Dendritic cell treated with granulocyte-macrophage colony-stimulating factor and Interleukin-4, amounts not matched to agents 40 ng/mL and 50 ng/mL, for 4 days (primary cell): ENCODE measurements at regions of chr17 and their contacts with region 1.

Region 1: DNA sequence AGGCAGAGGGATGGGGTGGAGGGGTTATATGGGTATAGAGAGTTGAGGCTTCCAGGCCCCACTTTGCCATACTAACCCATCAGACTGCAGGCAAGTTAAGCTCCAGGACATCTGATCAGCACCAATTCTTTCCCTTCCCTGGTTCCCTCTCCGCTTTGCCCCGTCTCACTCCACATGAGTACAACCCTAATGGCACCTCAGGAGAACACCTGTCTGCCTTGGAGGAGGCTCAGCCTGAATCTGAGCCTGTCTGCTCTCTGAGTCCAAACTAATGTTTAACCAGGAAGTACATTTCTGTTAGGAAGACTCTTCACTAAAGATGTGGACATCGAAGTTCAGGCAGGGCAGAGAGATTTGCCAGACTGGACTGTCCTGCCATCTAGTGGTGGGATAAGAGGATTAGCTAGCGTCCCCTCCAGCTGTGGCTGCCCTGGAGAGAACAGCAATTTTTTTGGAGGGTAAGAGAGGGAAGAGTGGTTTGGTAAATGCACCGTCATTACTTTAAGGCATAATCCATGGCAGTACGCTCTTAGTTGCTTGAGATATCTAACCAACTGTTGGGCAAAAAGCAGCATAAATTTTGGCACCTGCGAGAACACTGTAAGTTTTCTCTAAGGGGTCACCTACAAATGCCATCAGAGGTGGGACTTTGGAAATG is 29.2 kb upstream of the LRRC75A start:
- H3K4me3 Mint-ChIP-seq: no peak overlapping the region
- H3K27ac Mint-ChIP-seq: peak overlapping the region; percentile 77
- H3K4me1 Mint-ChIP-seq: peaks cover 19% of the 10 kb centered on the region
- H3K27me3 Mint-ChIP-seq: peaks cover 8% of the 10 kb centered on the region

Region 2: GRCh38 chr17:16363749-16364536 is 157.3 kb before region 1 on chr17:
- intact Hi-C with region 1: loop called (anchors 1 kb)
- H3K4me3 Mint-ChIP-seq: no peak overlapping the region
- H3K27ac Mint-ChIP-seq: no peak overlapping the region
- H3K4me1 Mint-ChIP-seq: no peaks in the 10 kb centered on the region
- H3K27me3 Mint-ChIP-seq: peaks cover 3% of the 10 kb centered on the region

Region 3: DNA sequence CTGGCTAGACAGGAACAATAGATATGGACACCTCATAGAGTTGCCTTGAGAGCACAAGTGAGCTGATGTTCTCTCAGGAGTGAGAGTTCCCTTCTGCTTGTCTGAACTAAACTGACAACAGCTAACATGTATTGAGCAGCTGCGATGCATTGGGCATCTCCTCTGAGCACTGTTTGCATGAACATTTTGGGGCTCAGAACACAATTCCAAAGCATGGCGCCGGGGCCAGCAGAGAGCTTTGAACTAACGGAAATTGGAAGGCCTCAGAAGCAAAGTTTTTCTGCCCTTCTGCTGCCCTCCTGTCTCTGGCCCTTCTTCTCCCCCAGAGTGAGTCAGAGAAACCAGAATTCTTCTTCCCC is 67.7 kb before region 1 on chr17:
- intact Hi-C with region 1: loop called (anchors 1 kb)
- H3K4me3 Mint-ChIP-seq: no peak overlapping the region
- H3K27ac Mint-ChIP-seq: no peak overlapping the region
- H3K4me1 Mint-ChIP-seq: no peaks in the 10 kb centered on the region
- H3K27me3 Mint-ChIP-seq: no peaks in the 10 kb centered on the region